Uterus (tissue), 4 donors: ENCODE measurements at regions of chr16 and their contacts with region 1.

Region 1: GRCh38 chr16:51072591-51072990 is 78.5 kb downstream of the SALL1 start:
- DNase-seq: no peak
- H3K4me3 ChIP-seq: no peak overlapping the region
- H3K27ac ChIP-seq: no peak overlapping the region
- H3K4me1 ChIP-seq: no peaks in the 10 kb centered on the region
- H3K27me3 ChIP-seq: no peaks in the 10 kb centered on the region
- CTCF ChIP-seq: no peak
- POLR2A ChIP-seq: no peak

Region 2: DNA sequence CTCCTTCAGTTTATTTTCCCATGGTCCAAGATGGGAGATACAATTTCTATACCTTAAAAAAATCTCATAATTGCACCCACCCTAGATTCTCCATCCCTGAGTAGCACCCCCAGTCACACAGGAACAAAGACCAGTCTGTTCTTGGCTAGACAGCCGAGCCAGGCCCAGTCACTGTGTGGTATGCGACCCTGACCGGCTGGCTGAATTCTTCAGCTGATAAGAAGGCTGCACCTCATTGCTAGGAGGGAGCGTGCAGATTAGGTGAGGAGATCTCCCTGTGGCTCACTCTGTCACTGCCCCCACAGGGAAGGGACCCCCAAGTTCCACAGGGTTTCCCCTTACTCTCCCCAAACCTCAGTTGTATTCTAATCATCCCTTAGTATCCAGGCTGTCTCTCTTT is 60.2 kb before region 1 on chr16:
- intact Hi-C with region 1: loop called (anchors 10 kb)
- DNase-seq: no peak
- H3K4me3 ChIP-seq: no peak overlapping the region
- H3K27ac ChIP-seq: no peak overlapping the region
- H3K4me1 ChIP-seq: no peaks in the 10 kb centered on the region
- H3K27me3 ChIP-seq: no peaks in the 10 kb centered on the region
- CTCF ChIP-seq: no peak
- POLR2A ChIP-seq: no peak